ENCODE measurements at regions of chr20 and their contacts with region 1.

Region 1: DNA sequence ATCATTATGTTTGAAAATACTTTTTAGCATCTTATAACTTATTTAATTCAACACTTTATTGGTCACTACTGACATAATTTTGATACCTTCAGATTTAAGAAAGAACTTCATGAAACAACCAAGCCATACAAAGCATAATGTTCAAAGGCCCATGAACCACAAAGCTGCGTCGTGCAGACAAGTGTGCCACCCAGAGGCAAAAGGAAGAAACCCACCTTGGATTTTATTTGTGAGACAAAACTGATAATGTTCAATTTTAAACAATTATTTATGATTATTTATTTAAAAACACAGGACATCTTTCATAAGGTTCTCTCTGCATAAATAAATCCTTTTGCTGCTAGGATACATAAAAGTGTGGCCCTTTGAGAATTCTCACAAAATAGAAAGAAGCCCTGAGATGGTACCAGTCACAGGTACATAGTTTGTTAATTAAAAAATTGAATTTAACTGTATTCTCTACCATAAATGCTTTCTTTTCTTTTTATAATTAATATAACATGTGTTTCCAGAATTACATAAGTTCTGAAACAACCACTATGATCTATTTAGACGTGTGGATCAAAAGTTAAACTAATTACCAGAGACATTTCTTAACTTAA is 143.7 kb downstream of the RALGAPA2 start:
- DNase-seq: no peak
- H3K4me3 ChIP-seq: no peak overlapping the region
- H3K27ac ChIP-seq: no peak overlapping the region
- H3K4me1 ChIP-seq: no peaks in the 10 kb centered on the region
- H3K27me3 ChIP-seq: no peaks in the 10 kb centered on the region
- CTCF ChIP-seq: peak in 10 of 11 experiments; percentile 17 to 62 (median 54)
- POLR2A ChIP-seq: no peak

Region 2: DNA sequence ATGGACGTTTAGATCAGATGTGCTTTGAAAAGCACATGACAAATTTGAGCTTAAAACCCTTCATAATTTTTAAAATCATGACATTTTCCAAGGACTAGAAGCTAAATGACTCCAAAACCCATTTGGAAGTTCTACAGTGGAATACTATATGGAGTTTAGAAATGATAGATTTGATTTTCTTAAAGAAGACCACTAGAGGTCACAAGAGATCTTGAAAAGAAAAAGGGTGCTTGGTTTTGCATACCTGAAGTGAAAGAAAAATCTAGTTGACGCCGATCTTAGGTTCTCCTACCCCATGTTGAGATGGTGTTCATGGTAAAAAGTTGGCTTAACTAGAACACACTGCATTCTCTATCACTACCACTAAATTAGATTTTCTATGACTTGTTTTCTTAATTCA is 484.9 kb before region 1 on chr20:
- intact Hi-C with region 1: loop called (anchors 5 kb)
- DNase-seq: no peak
- H3K4me3 ChIP-seq: no peak overlapping the region
- H3K27ac ChIP-seq: no peak overlapping the region
- H3K4me1 ChIP-seq: no peaks in the 10 kb centered on the region
- H3K27me3 ChIP-seq: peaks cover 0 to 2% (median 0%) of the 10 kb centered on the region in 7 donors
- CTCF ChIP-seq: peak in 6 of 11 experiments; percentile 22 to 50 (median 37)
- POLR2A ChIP-seq: no peak

Region 3: DNA sequence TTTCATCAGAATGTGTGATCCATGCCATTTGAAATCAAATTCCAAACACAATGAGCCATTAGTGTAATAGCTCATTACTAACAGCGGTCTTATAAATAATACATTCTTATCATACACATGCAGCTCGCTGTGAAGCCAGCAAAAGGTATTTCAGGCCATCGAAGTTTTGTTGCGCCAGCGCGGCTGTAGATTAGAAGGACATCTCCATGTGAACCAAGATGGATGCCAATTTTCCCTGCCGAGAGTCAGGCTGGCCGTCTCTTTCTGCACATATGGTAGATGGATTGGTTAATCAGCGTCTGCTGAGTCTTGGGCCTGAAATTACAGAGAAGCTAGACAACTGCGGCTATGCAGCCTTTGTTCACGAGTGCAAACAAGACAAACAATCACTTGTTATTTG is 472.3 kb before region 1 on chr20:
- intact Hi-C with region 1: loop called (anchors 5 kb)
- DNase-seq: no peak
- H3K4me3 ChIP-seq: no peak overlapping the region
- H3K27ac ChIP-seq: no peak overlapping the region
- H3K4me1 ChIP-seq: no peaks in the 10 kb centered on the region
- H3K27me3 ChIP-seq: peaks cover 0 to 11% (median 0%) of the 10 kb centered on the region in 7 donors
- CTCF ChIP-seq: no peak
- POLR2A ChIP-seq: no peak

Region 4: DNA sequence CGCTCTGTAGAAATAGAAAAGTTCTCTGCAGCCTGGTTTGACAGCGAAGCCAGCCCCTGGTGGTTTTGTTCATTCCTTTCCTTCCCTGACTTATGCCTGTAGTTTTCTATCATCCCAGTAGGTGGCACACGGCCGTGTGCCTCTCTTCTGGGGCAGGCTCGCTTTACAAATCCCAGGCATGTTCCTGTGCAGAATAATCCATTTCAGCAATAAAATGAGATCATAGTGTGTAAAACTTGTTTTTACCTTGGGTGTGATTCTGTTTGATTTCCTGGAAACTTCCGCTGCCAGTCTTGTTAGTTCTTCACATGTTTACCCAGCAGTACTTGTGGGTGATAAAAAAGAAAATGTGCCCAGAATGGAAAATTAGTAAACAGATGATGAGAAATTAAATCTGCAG is 208.2 kb before region 1 on chr20:
- intact Hi-C with region 1: loop called (anchors 5 kb)
- DNase-seq: no peak
- H3K4me3 ChIP-seq: no peak overlapping the region
- H3K27ac ChIP-seq: no peak overlapping the region
- H3K4me1 ChIP-seq: peaks cover 4 to 42% (median 23%) of the 10 kb centered on the region in 6 donors
- H3K27me3 ChIP-seq: peaks cover 4 to 64% (median 45%) of the 10 kb centered on the region in 7 donors
- CTCF ChIP-seq: peak; percentile 12 to 79 (median 65)
- POLR2A ChIP-seq: no peak